Posterior cingulate gyrus (tissue), 11 donors: ENCODE measurements at regions of chrX and their contacts with region 1.

Region 1: GRCh38 chrX:19904778-19905367 is 17.5 kb upstream of the SH3KBP1 start:
- DNase-seq: peak in 3 of 10 donors; percentile 8 to 17 (median 9)

Region 2: DNA sequence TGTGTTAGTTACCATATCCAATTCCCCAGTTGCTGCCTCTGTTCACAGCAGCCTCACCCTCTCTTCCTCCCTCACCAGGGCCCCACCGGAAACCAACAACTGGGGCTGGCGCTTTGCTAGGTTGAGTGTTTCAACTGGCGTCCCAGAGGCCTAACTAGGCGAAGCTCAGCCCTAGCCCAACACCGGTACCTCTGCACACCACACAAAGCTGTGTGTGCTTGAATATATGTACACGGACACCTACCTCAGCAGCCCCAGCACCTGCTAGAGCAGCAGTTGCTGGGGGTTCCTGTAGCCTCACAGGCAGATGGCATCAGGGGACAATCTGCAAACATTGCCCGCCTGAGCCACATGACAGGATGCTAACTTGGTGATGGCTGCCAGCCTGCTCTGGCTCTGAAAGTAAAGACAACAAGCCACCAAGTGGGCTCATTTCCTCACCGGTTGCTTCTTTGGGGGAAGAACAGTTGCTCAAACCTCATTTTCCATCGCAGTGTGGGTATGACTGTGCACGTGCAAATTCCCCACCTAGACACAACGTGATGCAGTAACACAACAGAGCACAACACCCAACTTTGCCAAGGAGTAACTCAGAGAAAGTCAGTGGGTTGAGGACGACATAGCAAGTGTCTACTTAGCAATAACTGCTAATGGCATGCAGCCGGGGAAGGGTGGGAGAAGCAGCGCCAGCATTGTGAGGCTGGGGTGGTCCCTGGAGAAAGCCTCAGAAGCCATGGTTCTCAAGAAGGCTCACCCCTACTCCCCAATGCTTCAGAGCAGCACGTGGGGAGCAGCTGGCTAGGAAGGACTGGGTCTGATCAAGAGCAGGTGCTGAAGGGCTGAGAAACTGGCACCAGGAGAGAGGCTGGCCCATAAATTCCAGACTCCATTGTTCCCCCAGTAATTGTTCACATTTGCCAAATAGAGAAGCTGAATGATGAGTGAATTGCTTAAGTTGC is 156.9 kb before region 1 on chrX:
- intact Hi-C with region 1: no loop called
- DNase-seq: no peak

Region 3: DNA sequence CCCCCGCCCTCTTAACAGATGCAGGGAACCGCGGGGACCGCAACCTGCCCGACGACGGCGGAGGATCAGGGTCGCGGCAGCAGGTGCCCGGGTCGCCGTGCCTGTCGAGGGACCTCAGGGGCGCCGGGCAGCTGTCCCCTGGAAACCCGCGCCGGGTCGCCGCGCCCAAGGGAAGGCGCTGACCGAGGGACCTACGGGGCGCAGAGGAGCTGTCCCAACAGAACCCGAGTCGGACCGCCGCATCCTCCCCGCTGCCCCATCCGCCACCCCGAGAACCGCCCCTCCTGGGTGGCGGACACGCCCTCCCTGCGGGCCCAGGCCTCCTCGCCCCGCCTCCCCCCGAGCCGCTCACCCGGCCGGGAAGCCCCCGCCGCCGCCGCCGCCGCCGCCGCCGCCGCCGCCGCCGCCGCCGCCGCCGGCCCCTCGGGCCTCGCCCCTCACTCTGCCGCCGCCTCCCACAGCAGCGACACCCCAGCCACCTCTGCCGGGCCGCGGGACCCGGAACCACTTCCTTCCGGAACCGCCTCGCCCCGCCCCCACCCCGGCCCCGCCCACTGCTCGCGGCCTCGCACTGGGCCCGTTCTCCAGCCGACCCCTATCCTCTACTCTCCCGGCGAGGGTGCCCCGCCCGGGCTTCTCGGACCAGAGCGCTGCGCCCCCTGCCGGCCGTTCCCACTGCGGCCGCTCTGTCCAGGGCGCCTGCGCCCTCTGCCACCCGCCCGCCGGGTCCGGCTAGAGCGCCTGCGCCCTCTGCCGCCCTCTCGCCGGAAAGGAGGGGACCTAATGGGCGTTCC is 85.9 kb after region 1 on chrX and contains the start of gene BCLAF3:
- intact Hi-C with region 1: loop called (anchors 5 kb)
- DNase-seq: peak; percentile 76 to 98 (median 82)

Region 4: GRCh38 chrX:20015945-20016615 is 111.2 kb after region 1 on chrX:
- intact Hi-C with region 1: no loop called
- DNase-seq: no peak

Region 5: DNA sequence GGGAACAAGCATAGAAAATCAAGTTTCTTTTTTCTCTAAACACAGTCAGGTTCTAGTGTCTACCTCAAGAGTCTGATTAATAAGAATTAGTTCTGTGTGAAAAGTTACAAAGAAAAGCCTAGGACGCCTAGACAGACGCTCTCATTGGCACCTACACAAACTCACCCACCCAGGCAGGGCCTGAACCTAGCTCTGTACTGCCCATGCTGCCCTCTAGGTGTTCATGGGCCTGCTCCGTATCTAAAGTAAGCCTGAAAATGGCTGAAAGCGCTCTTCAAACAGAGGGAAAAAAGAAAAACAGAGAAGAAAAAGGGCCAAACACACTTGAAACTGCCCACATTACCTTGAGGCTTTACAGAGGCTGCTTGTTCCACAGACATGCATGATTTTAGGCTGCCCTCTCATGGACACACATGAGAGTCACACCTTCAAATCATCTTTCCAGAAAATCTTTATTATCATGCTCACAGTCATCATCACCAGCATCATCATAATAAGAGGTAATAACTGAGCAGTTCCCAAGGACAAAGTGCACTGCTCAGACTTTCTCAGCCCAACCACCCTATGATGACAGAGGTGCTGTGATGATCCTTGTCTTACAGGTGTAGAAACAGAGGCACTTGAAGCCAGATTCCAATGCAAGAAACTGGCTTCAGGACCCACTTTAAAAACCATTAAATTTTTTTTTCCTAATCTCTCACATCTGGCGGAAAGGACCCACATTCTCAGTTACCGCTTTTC is 162.3 kb after region 1 on chrX:
- intact Hi-C with region 1: loop called (anchors 5 kb)
- DNase-seq: no peak

Region 6: GRCh38 chrX:20139966-20140365 is 235.1 kb after region 1 on chrX:
- intact Hi-C with region 1: loop called (anchors 10 kb)
- DNase-seq: no peak

Region 7: DNA sequence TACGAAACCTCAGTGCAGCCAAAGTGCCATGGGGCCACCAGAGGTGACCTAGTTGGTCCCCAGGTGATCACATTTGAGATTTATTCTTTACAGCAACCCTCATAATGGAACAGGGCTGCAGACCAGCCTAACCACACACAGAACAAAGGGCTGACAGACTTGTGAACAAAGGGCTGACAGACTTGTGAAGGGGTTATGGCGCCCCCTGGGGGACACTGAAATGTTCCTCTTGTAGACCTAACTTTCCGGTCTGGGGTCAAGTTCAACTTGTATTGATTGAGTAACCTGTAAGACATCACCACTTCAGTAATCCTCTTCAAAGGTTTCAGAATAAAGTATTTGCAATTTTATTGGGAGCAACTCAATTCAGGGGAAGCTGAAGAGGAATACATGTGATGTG is 537.7 kb after region 1 on chrX:
- intact Hi-C with region 1: loop called (anchors 10 kb)
- DNase-seq: peak; percentile 25 to 94 (median 73)